CD8-positive, alpha-beta memory T cell (primary cell): ENCODE measurements at regions of chr7 and their contacts with region 1.

Region 1: DNA sequence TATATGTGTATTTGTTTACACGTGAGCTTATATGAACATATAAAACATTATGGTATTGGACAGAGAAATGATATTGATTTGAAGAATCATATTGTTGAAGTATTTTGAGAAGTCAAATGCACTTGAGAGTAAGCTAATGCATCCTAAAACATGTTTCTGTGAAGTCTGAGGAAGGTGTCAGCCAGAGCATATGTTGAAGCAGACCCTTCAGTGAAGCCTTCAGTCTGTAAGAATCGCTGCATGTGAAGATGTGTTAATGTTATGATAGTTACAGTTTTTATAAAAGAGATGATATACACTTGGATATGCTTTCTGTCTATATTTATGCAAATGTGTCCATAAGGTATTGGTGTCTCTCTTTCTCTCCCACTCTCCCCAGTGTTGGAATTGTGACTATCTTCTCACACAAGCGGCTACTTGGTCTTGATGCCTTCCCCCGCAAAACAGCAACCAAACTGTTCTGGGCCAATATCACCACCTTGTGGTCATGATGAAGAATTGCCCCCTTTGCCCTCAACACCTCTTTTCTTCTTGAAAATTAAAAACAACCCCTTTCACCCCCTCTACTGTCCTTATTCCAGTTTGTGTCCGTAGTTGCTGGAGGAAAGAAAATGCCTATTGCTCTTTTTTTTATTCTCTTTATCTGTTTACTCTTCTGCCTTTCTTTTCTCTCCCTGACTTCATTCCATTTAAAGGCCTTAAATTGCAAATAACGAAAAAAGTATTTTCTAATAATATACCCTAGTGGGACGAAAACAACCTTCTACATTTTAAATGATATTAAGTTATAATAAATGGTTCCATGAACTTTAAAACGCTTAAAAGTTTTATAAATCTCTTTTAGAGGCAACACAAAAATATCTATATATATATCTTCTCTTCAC is 64.9 kb downstream of the IKZF1 start:
- DNase-seq: peak in 4 of 5 donors; percentile 44 to 82 (median 72)
- H3K4me3 ChIP-seq: peak overlapping the region; percentile 27
- H3K4me3 Mint-ChIP-seq: peak overlapping the region; percentile 7 to 72 (median 62)
- H3K27ac ChIP-seq: no peak overlapping the region
- H3K27ac Mint-ChIP-seq: peak overlapping the region in 7 of 8 donors; percentile 87 to 100 (median 93)
- H3K4me1 ChIP-seq: peaks cover 97% of the 10 kb centered on the region
- H3K4me1 Mint-ChIP-seq: peaks cover 94 to 100% (median 98%) of the 10 kb centered on the region in 3 donors
- H3K27me3 ChIP-seq: no peaks in the 10 kb centered on the region
- H3K27me3 Mint-ChIP-seq: no peaks in the 10 kb centered on the region

Region 2: DNA sequence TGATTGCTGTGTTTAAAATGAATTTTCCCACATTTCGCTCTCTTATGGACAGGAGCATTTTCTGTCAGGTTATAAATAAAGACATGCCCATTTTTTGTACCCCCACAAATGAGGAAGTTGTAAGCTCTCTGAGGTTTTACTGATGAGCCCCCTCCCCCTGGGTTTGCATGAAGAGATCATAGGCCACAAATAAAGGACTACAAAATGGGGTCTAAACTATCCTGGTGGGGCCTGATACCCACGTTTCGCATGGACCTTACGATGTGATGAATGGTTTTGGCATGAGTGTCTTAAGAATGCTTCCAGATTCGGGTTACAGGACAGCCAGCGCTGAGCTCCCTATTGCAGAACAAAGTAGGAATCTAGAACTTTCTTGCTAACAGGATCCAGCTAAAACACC is 59.0 kb before region 1 on chr7:
- CTCF ChIA-PET with region 1: interaction called, 815 read pairs
- POLR2A ChIA-PET with region 1: interaction called, 49 read pairs
- DNase-seq: no peak
- H3K4me3 ChIP-seq: peak overlapping the region; percentile 92
- H3K4me3 Mint-ChIP-seq: peak overlapping the region; percentile 95 to 100 (median 99)
- H3K27ac ChIP-seq: peak overlapping the region; percentile 86
- H3K27ac Mint-ChIP-seq: peak overlapping the region; percentile 92 to 99 (median 98)
- H3K4me1 ChIP-seq: peaks cover 74% of the 10 kb centered on the region
- H3K4me1 Mint-ChIP-seq: peaks cover 77 to 85% (median 80%) of the 10 kb centered on the region in 3 donors
- H3K27me3 ChIP-seq: no peaks in the 10 kb centered on the region
- H3K27me3 Mint-ChIP-seq: no peaks in the 10 kb centered on the region